G401 (cell line): ENCODE measurements at regions of chr16 and their contacts with region 1.

Region 1: GRCh38 chr16:249431-249830 is 14.8 kb downstream of the FAM234A start:
- DNase-seq: no peak

Region 2: DNA sequence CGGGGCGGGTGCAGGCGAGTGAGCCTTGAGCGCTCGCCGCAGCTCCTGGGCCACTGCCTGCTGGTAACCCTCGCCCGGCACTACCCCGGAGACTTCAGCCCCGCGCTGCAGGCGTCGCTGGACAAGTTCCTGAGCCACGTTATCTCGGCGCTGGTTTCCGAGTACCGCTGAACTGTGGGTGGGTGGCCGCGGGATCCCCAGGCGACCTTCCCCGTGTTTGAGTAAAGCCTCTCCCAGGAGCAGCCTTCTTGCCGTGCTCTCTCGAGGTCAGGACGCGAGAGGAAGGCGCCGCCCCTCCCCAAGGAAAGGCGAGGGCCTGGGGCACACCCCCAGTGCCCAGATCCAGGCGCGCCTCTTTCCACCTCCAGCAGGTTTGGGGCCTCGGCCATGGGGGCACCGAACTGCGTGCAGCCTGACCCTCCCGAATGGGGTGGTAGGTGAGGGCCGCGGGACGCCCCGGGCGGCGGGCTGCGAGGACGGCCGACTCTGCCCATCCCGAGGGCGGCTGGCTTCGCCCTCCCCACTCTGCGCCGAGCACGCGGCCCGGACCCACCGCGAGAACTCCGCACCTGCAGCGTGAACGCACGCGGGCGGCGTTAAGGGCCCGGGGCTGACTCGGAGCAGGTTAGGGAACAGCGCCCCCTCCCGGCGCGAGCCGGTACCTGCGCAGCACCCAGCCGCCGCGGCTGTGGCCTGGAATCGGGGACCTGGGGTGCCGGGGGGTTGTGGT is 68.3 kb before region 1 on chr16:
- in situ Hi-C with region 1: no loop called
- DNase-seq: peak; percentile 49

Region 3: DNA sequence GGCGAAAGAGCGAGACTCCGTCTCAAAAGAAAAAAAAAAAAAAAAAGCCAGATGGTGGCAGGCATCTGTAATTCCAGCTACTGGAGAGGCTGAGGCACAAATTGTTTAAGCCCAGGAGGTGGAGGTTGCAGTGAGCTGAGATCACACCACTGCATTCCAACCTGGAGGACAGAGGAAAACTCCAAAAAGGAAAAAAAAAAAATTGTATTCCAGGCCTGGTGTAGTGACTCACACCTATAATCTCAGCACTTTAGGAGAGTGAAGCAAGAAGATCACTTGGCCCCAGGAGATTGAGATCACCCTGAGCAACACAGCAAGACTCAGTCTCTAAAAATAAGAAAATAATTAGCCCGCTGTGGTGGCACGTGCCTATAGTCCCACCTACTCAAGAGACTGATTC is 49.0 kb before region 1 on chr16:
- in situ Hi-C with region 1: loop called (anchors 5 kb)
- DNase-seq: no peak

Region 4: GRCh38 chr16:318628-319027 is 69.2 kb after region 1 on chr16:
- in situ Hi-C with region 1: no loop called
- DNase-seq: no peak